ENCODE measurements at regions of chr12 and their contacts with region 1.

Region 1: GRCh38 chr12:103986829-103987228 is 21.2 kb downstream of the TDG start:
- ATAC-seq: peak in 2 of 8 experiments; percentile 36 to 66
- H3K4me3 ChIP-seq: no peak overlapping the region
- H3K27ac ChIP-seq: no peak overlapping the region
- H3K4me1 ChIP-seq: peaks cover 0 to 9% of the 10 kb centered on the region in 2 donors

Region 2: DNA sequence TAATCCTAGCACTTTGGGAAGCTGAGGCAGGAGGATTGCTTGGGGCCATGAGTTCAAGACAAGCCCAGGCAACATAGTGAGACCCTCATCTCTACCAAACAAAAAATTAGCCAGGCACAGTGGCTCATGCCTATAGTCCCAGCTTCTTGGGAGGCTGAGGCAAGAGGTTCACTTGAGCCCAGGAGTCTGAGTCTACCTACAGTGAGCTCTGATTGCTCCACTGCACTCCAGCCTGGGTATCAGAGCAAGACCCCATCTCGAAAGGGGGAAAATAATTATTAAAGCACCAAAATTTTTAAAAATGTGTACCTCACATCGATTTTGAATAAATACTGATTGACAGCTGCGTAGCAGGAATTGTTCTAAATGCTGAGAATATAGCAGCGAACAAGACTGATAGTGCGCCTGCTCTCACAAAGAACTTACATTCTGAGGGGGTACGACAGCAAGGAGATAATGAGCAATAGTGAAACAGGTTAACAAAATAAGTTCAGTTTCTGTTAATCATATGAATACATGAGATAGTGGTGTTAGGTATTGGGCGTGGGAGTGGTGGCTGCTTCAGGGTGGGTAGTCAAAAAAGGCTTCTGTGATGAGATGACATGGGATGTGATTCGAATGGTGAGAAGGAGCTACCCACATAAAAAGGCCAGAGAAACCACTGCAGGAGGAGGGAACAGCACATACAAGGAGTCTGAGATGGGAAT is 97.1 kb after region 1 on chr12:
- in situ Hi-C with region 1: loop called in 1 of 9 experiments (anchors 25 kb)
- ATAC-seq: no peak
- H3K4me3 ChIP-seq: no peak overlapping the region
- H3K27ac ChIP-seq: no peak overlapping the region
- H3K4me1 ChIP-seq: no peaks in the 10 kb centered on the region